CD4-positive, alpha-beta memory T cell (primary cell): ENCODE measurements at regions of chr1 and their contacts with region 1.

Region 1: DNA sequence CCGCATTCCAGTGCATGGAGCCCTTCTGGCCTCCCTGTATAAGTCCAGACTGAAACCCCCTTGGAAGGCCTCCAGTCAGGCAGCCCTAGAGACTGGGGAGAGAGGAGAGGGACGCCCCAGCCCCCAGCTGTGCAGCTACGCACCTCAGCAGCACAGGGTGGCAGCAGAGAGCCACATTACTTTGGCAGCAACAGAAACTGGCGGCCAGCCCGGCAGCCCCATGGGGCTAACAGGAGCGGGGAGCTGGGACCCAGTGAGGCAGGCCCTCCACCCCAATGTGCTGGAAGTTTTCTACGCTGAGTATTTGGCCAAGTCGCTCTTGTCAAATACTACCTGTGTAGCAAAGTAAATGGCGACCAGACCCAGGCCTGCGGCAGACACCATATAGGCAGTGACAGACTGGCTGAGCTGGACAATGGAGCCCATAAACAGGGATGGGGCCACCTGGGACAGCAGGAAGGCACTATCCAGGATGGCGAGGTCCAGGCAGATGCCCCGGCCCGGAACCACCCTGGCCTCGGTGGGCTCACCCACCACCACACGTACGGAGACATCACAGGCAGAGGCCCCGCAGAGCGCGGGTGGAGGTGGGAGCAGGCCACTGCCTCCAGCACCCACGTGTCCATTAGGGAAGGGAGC is 21.2 kb downstream of the SLC45A3 start:
- DNase-seq: peak; percentile 58 to 65 (median 63)
- H3K4me3 ChIP-seq: no peak overlapping the region
- H3K4me3 Mint-ChIP-seq: no peak overlapping the region
- H3K27ac ChIP-seq: no peak overlapping the region
- H3K27ac Mint-ChIP-seq: peak overlapping the region in 2 of 7 donors; percentile 41 to 71
- H3K4me1 ChIP-seq: no peaks in the 10 kb centered on the region
- H3K4me1 Mint-ChIP-seq: peaks cover 0 to 4% (median 2%) of the 10 kb centered on the region in 4 donors
- H3K27me3 ChIP-seq: no peaks in the 10 kb centered on the region
- H3K27me3 Mint-ChIP-seq: peaks cover 0 to 1% of the 10 kb centered on the region in 2 donors

Region 2: GRCh38 chr1:205528887-205529825 is 129.9 kb before region 1 on chr1:
- CTCF ChIA-PET with region 1: interaction called, 83 read pairs
- POLR2A ChIA-PET with region 1: no interaction called
- intact Hi-C with region 1: loop called (anchors 1 kb)
- DNase-seq: peak; percentile 66 to 76 (median 69)
- H3K4me3 ChIP-seq: no peak overlapping the region
- H3K4me3 Mint-ChIP-seq: peak overlapping the region in 5 of 8 donors; percentile 26 to 73 (median 39)
- H3K27ac ChIP-seq: no peak overlapping the region
- H3K27ac Mint-ChIP-seq: peak overlapping the region in 1 of 7 donors; percentile 73
- H3K4me1 ChIP-seq: no peaks in the 10 kb centered on the region
- H3K4me1 Mint-ChIP-seq: peaks cover 0 to 5% (median 4%) of the 10 kb centered on the region in 4 donors
- H3K27me3 ChIP-seq: no peaks in the 10 kb centered on the region
- H3K27me3 Mint-ChIP-seq: peaks cover 3 to 4% of the 10 kb centered on the region in 2 donors

Region 3: GRCh38 chr1:205600085-205600484 is 59.0 kb before region 1 on chr1:
- CTCF ChIA-PET with region 1: interaction called, 484 read pairs
- POLR2A ChIA-PET with region 1: interaction called, 4 read pairs
- intact Hi-C with region 1: no loop called
- DNase-seq: no peak
- H3K4me3 ChIP-seq: no peak overlapping the region
- H3K4me3 Mint-ChIP-seq: no peak overlapping the region
- H3K27ac ChIP-seq: no peak overlapping the region
- H3K27ac Mint-ChIP-seq: peak overlapping the region in 3 of 7 donors; percentile 37 to 80 (median 59)
- H3K4me1 ChIP-seq: no peaks in the 10 kb centered on the region
- H3K4me1 Mint-ChIP-seq: peaks cover 10 to 15% (median 14%) of the 10 kb centered on the region in 4 donors
- H3K27me3 ChIP-seq: no peaks in the 10 kb centered on the region
- H3K27me3 Mint-ChIP-seq: no peaks in the 10 kb centered on the region

Region 4: GRCh38 chr1:205645519-205645918 is 13.5 kb before region 1 on chr1:
- CTCF ChIA-PET with region 1: interaction called, 11 read pairs
- POLR2A ChIA-PET with region 1: no interaction called
- intact Hi-C with region 1: no loop called
- DNase-seq: no peak
- H3K4me3 ChIP-seq: no peak overlapping the region
- H3K4me3 Mint-ChIP-seq: peak overlapping the region in 1 of 8 donors; percentile 13
- H3K27ac ChIP-seq: no peak overlapping the region
- H3K27ac Mint-ChIP-seq: peak overlapping the region in 1 of 7 donors; percentile 58
- H3K4me1 ChIP-seq: no peaks in the 10 kb centered on the region
- H3K4me1 Mint-ChIP-seq: no peaks in the 10 kb centered on the region
- H3K27me3 ChIP-seq: no peaks in the 10 kb centered on the region
- H3K27me3 Mint-ChIP-seq: peaks cover 2 to 4% of the 10 kb centered on the region in 2 donors

Region 5: DNA sequence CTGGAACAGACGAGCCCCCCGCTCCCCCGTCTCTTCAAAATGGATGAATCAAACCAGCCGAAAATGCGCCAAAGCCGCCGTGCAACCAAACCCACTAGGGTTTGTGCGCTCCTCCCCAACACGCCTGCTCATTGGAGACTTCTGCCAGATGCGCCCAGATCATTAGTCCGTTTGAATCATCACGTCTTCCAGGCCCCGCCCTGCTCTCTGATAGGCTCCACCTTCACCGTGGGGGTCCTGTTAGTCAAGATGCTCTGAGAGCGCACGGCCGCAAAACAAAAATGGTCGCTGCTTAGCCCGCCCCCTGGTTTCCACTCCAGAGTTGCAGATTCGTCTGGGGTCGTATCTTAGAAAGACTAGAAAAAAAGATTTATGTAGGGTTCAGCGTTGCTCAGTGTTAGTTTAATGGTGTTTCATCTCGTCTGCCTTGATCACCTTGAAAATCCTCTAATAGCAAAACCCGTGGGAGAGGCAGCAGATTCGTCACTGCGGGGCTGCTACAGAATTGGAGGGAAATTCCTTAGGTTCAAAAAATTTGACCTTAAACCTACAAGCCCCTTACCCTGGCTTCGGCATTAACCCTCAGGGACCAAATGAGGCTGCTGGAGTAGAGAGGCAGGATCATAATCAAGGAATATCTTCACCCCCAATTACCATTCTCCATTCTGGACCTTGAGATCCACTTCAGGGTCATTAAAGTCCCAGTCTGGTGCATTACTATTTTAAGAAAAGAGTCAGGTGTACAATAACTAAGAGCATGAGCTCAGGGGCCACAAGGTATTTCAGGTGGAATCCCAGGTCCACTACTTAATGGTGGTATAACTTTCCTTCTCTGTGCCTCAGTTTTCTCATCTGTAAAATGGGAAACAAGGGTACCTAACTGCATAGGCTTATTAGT is 91.3 kb after region 1 on chr1 and contains the start of gene NUCKS1:
- CTCF ChIA-PET with region 1: interaction called, 13 read pairs
- POLR2A ChIA-PET with region 1: no interaction called
- intact Hi-C with region 1: no loop called
- DNase-seq: peak; percentile 94 to 99 (median 98)
- H3K4me3 ChIP-seq: peak within 1 kb of the TSS; percentile 83 to 91
- H3K4me3 Mint-ChIP-seq: peak within 1 kb of the TSS; percentile 95 to 99 (median 98)
- H3K27ac ChIP-seq: peak within 1 kb of the TSS; percentile 87
- H3K27ac Mint-ChIP-seq: peak within 1 kb of the TSS; percentile 95 to 100 (median 98)
- H3K4me1 ChIP-seq: peaks cover 34% of the 10 kb centered on the region
- H3K4me1 Mint-ChIP-seq: peaks cover 25 to 57% (median 39%) of the 10 kb centered on the region in 4 donors
- H3K27me3 ChIP-seq: no peaks in the 10 kb centered on the region
- H3K27me3 Mint-ChIP-seq: peaks cover 0 to 2% of the 10 kb centered on the region in 2 donors
- total RNA-seq, gene NUCKS1: 111 to 117 TPM

Region 6: GRCh38 chr1:205791568-205792180 is 132.6 kb after region 1 on chr1:
- CTCF ChIA-PET with region 1: interaction called, 28 read pairs
- POLR2A ChIA-PET with region 1: no interaction called
- intact Hi-C with region 1: no loop called
- DNase-seq: peak; percentile 51 to 64 (median 56)
- H3K4me3 ChIP-seq: no peak overlapping the region
- H3K4me3 Mint-ChIP-seq: no peak overlapping the region
- H3K27ac ChIP-seq: no peak overlapping the region
- H3K27ac Mint-ChIP-seq: peak overlapping the region in 2 of 7 donors; percentile 74 to 81
- H3K4me1 ChIP-seq: no peaks in the 10 kb centered on the region
- H3K4me1 Mint-ChIP-seq: no peaks in the 10 kb centered on the region
- H3K27me3 ChIP-seq: no peaks in the 10 kb centered on the region
- H3K27me3 Mint-ChIP-seq: no peaks in the 10 kb centered on the region

Region 7: DNA sequence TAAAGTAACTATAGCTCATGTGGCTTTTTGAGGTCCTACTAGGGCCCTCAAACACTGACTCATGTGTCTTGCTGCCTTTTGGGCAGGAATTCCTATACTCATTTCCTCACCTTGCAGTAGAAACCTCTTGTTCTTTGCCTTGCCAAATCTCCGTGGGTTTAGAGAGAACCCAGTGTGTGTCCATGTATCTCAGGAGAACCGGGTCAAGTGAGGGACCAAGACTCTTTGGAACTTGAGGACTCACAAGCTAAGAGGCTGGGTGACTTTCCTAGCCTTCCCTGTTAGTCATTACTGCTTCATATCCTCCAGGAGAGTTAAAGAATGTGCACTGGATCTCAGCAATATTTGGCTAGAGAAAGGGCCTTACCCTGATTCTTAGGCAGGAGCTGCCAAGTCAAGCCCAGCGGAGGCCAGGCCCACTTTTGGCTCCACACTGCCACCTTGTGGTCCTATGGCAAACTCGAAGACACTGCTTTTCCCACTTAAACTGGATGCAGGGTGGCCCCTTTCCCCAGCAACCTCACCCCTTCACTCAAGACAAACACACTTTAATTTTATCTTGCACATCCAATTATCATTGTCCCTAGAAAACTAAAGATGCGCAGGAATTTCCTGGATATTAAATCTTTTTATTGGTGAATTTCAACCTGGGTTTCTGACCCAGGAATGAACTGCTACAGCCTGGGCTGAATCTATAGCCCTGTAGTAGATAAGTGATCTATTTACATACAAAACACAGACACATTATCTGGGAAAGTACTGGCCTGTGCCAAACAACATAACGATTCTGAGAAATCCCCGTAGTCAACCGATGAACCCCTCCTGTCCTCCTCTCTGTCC is 447.5 kb after region 1 on chr1:
- CTCF ChIA-PET with region 1: interaction called, 7 read pairs
- POLR2A ChIA-PET with region 1: no interaction called
- intact Hi-C with region 1: loop called (anchors 5 kb)
- DNase-seq: peak; percentile 65 to 72 (median 68)
- H3K4me3 ChIP-seq: no peak overlapping the region
- H3K4me3 Mint-ChIP-seq: no peak overlapping the region
- H3K27ac ChIP-seq: no peak overlapping the region
- H3K27ac Mint-ChIP-seq: peak overlapping the region in 2 of 7 donors; percentile 16 to 58
- H3K4me1 ChIP-seq: no peaks in the 10 kb centered on the region
- H3K4me1 Mint-ChIP-seq: peaks cover 3 to 9% (median 4%) of the 10 kb centered on the region in 4 donors
- H3K27me3 ChIP-seq: no peaks in the 10 kb centered on the region
- H3K27me3 Mint-ChIP-seq: peaks cover 2 to 6% of the 10 kb centered on the region in 2 donors